Spleen (tissue), 13 donors: ENCODE measurements at regions of chr18 and their contacts with region 1.

Region 1: DNA sequence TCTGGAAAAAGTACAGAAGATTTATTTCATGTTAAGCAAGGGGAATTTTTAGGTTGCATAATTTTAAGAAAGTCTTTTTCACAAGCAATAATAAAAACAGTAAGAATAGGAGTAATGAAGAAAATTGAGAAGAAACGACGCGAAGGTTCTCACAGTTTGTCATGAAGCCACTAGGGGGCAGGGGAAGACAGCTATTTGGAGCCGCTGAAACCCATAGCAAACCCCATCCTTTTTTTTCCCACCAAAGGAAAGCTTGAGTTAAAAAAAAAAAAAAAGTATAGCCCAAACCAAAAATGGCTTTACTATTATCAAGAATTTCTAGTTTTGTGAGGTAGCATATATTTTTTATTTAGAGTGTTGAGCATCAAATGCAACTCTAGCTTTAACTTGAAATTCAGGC is 300.9 kb downstream of the PHLPP1 start:
- DNase-seq: no peak
- H3K4me3 ChIP-seq: no peak overlapping the region
- H3K27ac ChIP-seq: no peak overlapping the region
- H3K4me1 ChIP-seq: no peaks in the 10 kb centered on the region
- H3K27me3 ChIP-seq: peaks cover 0 to 16% (median 0%) of the 10 kb centered on the region in 7 donors
- CTCF ChIP-seq: peak; percentile 47 to 85 (median 79)
- POLR2A ChIP-seq: no peak

Region 2: GRCh38 chr18:63444567-63444966 is 428.3 kb after region 1 on chr18:
- intact Hi-C with region 1: loop called (anchors 5 kb)
- DNase-seq: no peak
- H3K4me3 ChIP-seq: no peak overlapping the region
- H3K27ac ChIP-seq: peak overlapping the region in 5 of 8 donors; percentile 21 to 76 (median 67)
- H3K4me1 ChIP-seq: peaks cover 0 to 21% (median 3%) of the 10 kb centered on the region in 6 donors
- H3K27me3 ChIP-seq: no peaks in the 10 kb centered on the region
- CTCF ChIP-seq: no peak
- POLR2A ChIP-seq: no peak